Transverse colon (tissue), 4 donors: ENCODE measurements at regions of chr5 and their contacts with region 1.

Region 1: GRCh38 chr5:149141224-149141956 is at the start of gene ABLIM3:
- DNase-seq: peak; percentile 60
- H3K4me3 ChIP-seq: peak within 1 kb of the TSS; percentile 22 to 69 (median 46)
- H3K27ac ChIP-seq: peak within 1 kb of the TSS; percentile 50 to 64 (median 56)
- H3K4me1 ChIP-seq: peaks cover 0 to 20% (median 6%) of the 10 kb centered on the region in 4 donors
- H3K27me3 ChIP-seq: peaks cover 17% of the 10 kb centered on the region
- CTCF ChIP-seq: peak; percentile 72 to 96 (median 94)
- EP300 ChIP-seq: no peak
- POLR2A ChIP-seq: no peak
- total RNA-seq, gene ABLIM3: 4.2 to 6.5 (median 4.7) TPM

Region 2: DNA sequence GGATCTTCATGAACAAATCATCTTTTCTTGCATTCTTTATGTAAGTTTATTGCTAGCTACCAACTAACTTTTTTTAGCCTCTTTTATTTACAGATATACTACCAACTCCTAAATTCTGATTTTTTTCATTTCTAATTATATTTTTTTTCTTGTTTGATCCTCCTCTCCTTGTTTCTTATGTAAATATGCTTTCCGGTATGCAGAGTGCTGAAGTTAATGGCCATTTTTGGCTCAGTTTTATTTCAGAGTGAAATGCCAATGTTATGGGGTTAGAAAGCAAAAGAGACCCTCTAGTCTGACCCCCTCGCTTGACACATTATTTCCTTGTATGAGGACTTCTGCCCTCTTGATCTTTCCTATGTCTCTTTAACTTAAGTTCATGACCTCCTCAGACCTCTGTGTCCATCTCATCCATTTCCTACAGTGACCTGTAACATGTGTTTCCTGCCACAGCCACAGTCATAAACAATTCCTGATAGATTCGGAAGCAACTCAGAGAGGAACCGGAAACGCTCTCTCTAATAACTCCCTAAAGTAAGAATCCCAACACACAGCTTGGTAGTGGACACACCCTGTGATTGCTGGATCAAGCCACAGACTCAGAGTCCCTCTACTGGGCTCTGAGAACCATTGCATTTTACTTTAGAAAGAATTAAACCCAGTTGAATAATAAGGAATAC is 87.4 kb after region 1 on chr5:
- in situ Hi-C with region 1: loop called in 3 of 4 experiments (anchors 10 to 25 kb)
- intact Hi-C with region 1: no loop called
- DNase-seq: peak; percentile 19
- H3K4me3 ChIP-seq: no peak overlapping the region
- H3K27ac ChIP-seq: peak overlapping the region; percentile 4 to 58 (median 20)
- H3K4me1 ChIP-seq: peaks cover 0 to 12% (median 2%) of the 10 kb centered on the region in 4 donors
- H3K27me3 ChIP-seq: peaks cover 8% of the 10 kb centered on the region
- CTCF ChIP-seq: peak; percentile 55 to 73 (median 67)
- EP300 ChIP-seq: no peak
- POLR2A ChIP-seq: no peak

Region 3: GRCh38 chr5:149238583-149238982 is 97.2 kb after region 1 on chr5:
- in situ Hi-C with region 1: loop called in 3 of 4 experiments (anchors 10 to 25 kb)
- intact Hi-C with region 1: no loop called
- DNase-seq: no peak
- H3K4me3 ChIP-seq: no peak overlapping the region
- H3K27ac ChIP-seq: no peak overlapping the region
- H3K4me1 ChIP-seq: no peaks in the 10 kb centered on the region
- H3K27me3 ChIP-seq: no peaks in the 10 kb centered on the region
- CTCF ChIP-seq: no peak
- EP300 ChIP-seq: no peak
- POLR2A ChIP-seq: no peak

Region 4: DNA sequence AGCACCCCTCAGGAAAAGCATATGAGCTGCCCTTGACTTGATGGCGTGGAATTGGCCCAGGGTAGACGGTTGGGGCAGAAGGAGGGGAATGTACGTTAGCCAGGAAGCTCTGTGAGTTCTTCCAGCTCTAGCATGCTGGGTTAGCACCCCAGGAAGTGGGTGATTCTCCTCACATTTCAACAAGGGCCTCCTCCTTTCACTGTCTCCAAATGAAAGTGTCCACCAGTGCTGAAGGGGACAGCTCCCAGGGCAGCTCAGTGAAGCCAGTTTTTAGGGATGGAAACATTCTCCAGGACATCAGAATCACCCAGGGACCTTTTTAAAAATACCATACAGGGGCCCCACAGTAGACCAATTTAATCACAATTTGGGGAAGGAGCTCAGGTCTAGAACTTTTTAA is 113.1 kb after region 1 on chr5:
- in situ Hi-C with region 1: loop called in 3 of 4 experiments (anchors 10 to 25 kb)
- intact Hi-C with region 1: no loop called
- DNase-seq: no peak
- H3K4me3 ChIP-seq: no peak overlapping the region
- H3K27ac ChIP-seq: no peak overlapping the region
- H3K4me1 ChIP-seq: no peaks in the 10 kb centered on the region
- H3K27me3 ChIP-seq: no peaks in the 10 kb centered on the region
- CTCF ChIP-seq: no peak
- EP300 ChIP-seq: no peak
- POLR2A ChIP-seq: no peak

Region 5: GRCh38 chr5:149271716-149272563 is 130.6 kb after region 1 on chr5 and contains the start of gene AFAP1L1:
- in situ Hi-C with region 1: no loop called
- intact Hi-C with region 1: loop called (anchors 5 kb)
- DNase-seq: peak; percentile 48
- H3K4me3 ChIP-seq: peak within 1 kb of the TSS; percentile 24 to 72 (median 50)
- H3K27ac ChIP-seq: peak within 1 kb of the TSS; percentile 36 to 60 (median 48)
- H3K4me1 ChIP-seq: peaks cover 0 to 15% (median 3%) of the 10 kb centered on the region in 4 donors
- H3K27me3 ChIP-seq: peaks cover 36% of the 10 kb centered on the region
- CTCF ChIP-seq: no peak
- EP300 ChIP-seq: no peak
- POLR2A ChIP-seq: no peak
- total RNA-seq, gene AFAP1L1: 2.2 to 4.1 (median 3.0) TPM

Region 6: GRCh38 chr5:149749481-149750365 is 608.3 kb after region 1 on chr5:
- in situ Hi-C with region 1: no loop called
- intact Hi-C with region 1: loop called (anchors 10 kb)
- DNase-seq: no peak
- H3K4me3 ChIP-seq: no peak overlapping the region
- H3K27ac ChIP-seq: peak overlapping the region; percentile 78 to 85 (median 81)
- H3K4me1 ChIP-seq: peaks cover 27 to 91% (median 49%) of the 10 kb centered on the region in 4 donors
- H3K27me3 ChIP-seq: no peaks in the 10 kb centered on the region
- CTCF ChIP-seq: no peak
- EP300 ChIP-seq: no peak
- POLR2A ChIP-seq: no peak